GM12878 (cell line): ENCODE measurements at regions of chr19 and their contacts with region 1.

Region 1: GRCh38 chr19:47210689-47211316 is 20.2 kb downstream of the BBC3 start:
- DNase-seq: no peak
- ATAC-seq: peak; percentile 82
- H3K4me3 ChIP-seq: no peak overlapping the region
- H3K27ac ChIP-seq: no peak overlapping the region
- H3K4me1 ChIP-seq: 0 out of 2 replicates have a peak, but pooled peaks cover 2% of the 10 kb centered on the region
- H3K27me3 ChIP-seq: no peaks in the 10 kb centered on the region
- CTCF ChIP-seq: peak; percentile 74 to 90 (median 82); a peak in 5 of 6 replicates
- EP300 ChIP-seq: no peak
- POLR2A ChIP-seq: 0 out of 2 replicates have a peak, but pooled peaks have one; percentile 29
- RAD21 ChIP-seq: peak; percentile 80

Region 2: DNA sequence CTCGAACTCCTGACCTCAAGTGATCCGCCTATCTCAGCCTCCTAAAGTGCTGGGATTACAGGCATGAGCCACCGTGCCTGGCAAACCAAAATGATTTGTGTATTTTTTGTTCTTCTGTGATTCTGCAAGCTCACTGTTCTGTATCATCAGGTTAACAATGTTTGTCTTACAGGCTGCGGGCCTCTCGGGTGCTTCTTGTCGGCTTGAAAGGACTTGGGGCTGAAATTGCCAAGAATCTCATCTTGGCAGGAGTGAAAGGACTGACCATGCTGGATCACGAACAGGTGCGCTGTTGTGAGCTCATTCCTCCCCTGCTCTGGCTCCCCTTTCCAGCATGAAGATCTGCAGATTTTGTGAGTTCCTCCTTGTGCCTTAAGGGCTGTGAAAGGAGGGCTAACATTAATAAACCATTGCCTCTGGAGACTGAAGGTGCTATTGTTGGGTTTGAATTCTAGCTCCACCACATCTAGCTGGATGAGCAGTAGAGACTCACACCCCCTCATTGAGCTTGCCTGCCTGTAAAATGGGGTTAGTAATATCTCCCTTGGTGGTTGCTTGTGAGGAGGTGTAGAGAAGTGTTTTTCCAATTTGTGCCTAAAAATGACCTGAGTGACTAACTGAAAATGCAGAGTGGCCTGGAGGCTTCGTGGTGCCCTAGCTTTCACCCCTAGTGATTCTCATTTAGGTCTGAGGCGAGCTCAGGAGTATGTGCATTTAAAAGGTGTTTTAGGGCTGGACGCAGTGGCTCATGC is 67.3 kb before region 1 on chr19:
- CTCF ChIA-PET with region 1: interaction called, 10 read pairs
- POLR2A ChIA-PET with region 1: interaction called, 3 read pairs
- RAD21 ChIA-PET with region 1: interaction called, 3 read pairs
- SMC1A ChIA-PET with region 1: interaction called, 5 read pairs
- in situ Hi-C with region 1: no loop called
- intact Hi-C with region 1: no loop called
- DNase-seq: no peak
- ATAC-seq: no peak
- H3K4me3 ChIP-seq: no peak overlapping the region
- H3K27ac ChIP-seq: no peak overlapping the region
- H3K4me1 ChIP-seq: no peaks in the 10 kb centered on the region
- H3K27me3 ChIP-seq: no peaks in the 10 kb centered on the region
- CTCF ChIP-seq: no peak
- EP300 ChIP-seq: no peak
- POLR2A ChIP-seq: no peak
- RAD21 ChIP-seq: no peak

Region 3: DNA sequence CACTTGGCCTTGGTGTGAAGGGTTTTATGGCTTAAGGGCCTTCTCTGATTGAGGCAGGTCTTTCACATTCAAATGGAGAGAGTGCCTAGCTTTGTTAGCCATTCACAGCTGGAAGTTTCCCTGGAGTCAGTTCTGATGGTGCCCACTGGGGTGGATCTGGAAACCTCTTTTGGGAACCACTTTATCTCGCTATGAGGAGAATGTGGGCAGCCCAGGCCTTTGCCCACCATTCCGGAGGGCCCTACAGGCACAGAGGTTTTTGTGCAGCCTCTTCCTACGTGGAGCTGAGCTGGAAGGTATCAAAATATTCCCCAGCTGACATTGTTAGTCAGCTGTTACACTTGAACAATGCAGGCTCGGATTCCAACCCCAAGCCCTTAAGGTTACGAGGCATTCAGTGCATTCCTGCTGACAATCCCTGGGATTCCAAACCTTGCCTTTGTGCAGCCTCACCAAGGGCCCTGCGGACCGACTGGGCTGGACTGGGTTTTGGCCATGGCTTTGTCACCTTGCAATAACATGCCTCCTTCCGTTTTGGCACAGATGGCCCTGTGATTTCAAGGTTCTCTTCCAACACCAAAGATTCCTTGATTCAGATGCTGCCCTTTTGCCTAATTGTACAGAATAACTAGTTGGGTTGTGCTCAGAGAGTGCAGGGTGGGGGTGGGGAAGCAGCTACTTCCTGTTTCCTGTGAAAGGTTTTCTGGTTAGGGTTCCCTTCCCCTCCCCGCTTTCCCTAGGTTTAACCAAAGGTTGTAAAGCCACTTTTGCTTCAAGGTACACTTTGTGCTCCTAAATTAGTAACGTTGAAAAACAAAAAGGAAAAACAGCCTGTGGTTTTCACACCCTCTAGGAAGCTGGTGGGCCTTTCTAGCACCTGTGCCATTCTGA is 53.1 kb before region 1 on chr19:
- CTCF ChIA-PET with region 1: interaction called, 24 read pairs
- POLR2A ChIA-PET with region 1: interaction called, 3 read pairs
- RAD21 ChIA-PET with region 1: interaction called, 8 read pairs
- SMC1A ChIA-PET with region 1: interaction called, 37 read pairs
- in situ Hi-C with region 1: no loop called
- intact Hi-C with region 1: no loop called
- DNase-seq: no peak
- ATAC-seq: peak; percentile 62
- H3K4me3 ChIP-seq: no peak overlapping the region
- H3K27ac ChIP-seq: peak overlapping the region; percentile 8
- H3K4me1 ChIP-seq: peaks cover 24% of the 10 kb centered on the region
- H3K27me3 ChIP-seq: no peaks in the 10 kb centered on the region
- CTCF ChIP-seq: no peak
- EP300 ChIP-seq: no peak
- POLR2A ChIP-seq: no peak
- RAD21 ChIP-seq: no peak

Region 4: DNA sequence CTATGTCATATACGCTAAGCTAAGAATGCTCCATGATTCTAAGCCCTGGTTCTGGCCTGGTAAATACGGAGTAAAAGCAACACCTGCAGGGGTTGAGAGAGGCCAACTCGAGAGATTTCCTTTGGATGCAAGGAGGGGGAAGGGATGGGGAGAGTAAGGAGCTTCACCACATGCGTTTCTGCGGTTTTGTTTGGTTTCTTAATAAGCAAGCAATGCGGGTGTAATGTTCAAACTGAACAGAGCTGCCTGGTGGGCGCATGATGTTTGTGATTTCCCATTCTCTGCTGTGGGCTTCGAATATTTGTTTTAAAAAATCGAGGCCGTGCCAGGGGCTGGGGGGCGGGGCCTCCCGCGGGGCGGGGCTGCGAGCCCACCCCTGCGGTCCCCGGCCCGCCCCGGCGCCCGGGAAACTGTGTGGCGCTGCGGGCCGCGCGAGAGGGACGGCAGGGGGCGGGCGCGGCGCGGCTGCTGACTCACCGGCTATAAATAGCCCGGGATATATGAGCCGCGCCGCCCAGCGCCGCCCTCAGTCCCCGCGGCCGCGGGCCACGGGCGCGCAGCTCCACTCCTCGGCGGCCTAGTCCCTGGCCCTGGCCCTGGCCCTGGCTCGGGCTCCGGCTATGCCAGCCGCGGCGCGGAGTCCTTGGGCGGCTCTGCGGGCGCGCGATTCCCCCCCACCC is 15.1 kb after region 1 on chr19:
- CTCF ChIA-PET with region 1: interaction called, 50 read pairs
- POLR2A ChIA-PET with region 1: interaction called, 36 read pairs
- RAD21 ChIA-PET with region 1: interaction called, 6 read pairs
- SMC1A ChIA-PET with region 1: interaction called, 46 read pairs
- in situ Hi-C with region 1: no loop called
- intact Hi-C with region 1: no loop called
- DNase-seq: no peak
- ATAC-seq: peak; percentile 73
- H3K4me3 ChIP-seq: peak overlapping the region; percentile 91; the same call in 1 of the 2 replicates
- H3K27ac ChIP-seq: peak overlapping the region; percentile 78
- H3K4me1 ChIP-seq: peaks cover 34% of the 10 kb centered on the region
- H3K27me3 ChIP-seq: no peaks in the 10 kb centered on the region
- CTCF ChIP-seq: peak; percentile 1 to 46 (median 5); a peak in 2 of 6 replicates
- EP300 ChIP-seq: peak; percentile 9 to 34; a peak in 1 of 4 replicates
- POLR2A ChIP-seq: no peak; the same call in 1 of the 2 replicates
- RAD21 ChIP-seq: no peak

Region 5: GRCh38 chr19:47256688-47257443 is 46.1 kb after region 1 on chr19:
- CTCF ChIA-PET with region 1: interaction called, 10 read pairs
- POLR2A ChIA-PET with region 1: interaction called, 8 read pairs
- RAD21 ChIA-PET with region 1: interaction called, 14 read pairs
- SMC1A ChIA-PET with region 1: interaction called, 3 read pairs
- in situ Hi-C with region 1: no loop called
- intact Hi-C with region 1: no loop called
- DNase-seq: peak; percentile 92
- ATAC-seq: peak; percentile 91
- H3K4me3 ChIP-seq: peak overlapping the region; percentile 93; the same call in 1 of the 2 replicates
- H3K27ac ChIP-seq: peak overlapping the region; percentile 86
- H3K4me1 ChIP-seq: peaks cover 8% of the 10 kb centered on the region
- H3K27me3 ChIP-seq: no peaks in the 10 kb centered on the region
- CTCF ChIP-seq: no peak
- EP300 ChIP-seq: no peak
- POLR2A ChIP-seq: peak; percentile 10; the same call in 1 of the 2 replicates
- RAD21 ChIP-seq: no peak